ENCODE measurements at regions of chr9 and their contacts with region 1.

Region 1: GRCh38 chr9:20622330-20623020 is at the start of gene MLLT3:
- DNase-seq: peak; percentile 94
- H3K4me3 ChIP-seq: peak within 1 kb of the TSS; percentile 81 to 97 (median 84)
- H3K27ac ChIP-seq: peak within 1 kb of the TSS; percentile 29
- H3K4me1 ChIP-seq: peaks cover 33% of the 10 kb centered on the region
- H3K27me3 ChIP-seq: no peaks in the 10 kb centered on the region
- CTCF ChIP-seq: no peak
- total RNA-seq, gene MLLT3: 8.8 to 11.7 TPM

Region 2: GRCh38 chr9:19925817-19926503 is 696.5 kb before region 1 on chr9:
- CTCF ChIA-PET with region 1: no interaction called
- dilution Hi-C with region 1: no loop called
- in situ Hi-C with region 1: loop called in 1 of 2 experiments (anchors 25 kb)
- intact Hi-C with region 1: loop called (anchors 2 kb)
- DNase-seq: peak; percentile 86
- H3K4me3 ChIP-seq: peak overlapping the region; percentile 21 to 39 (median 36)
- H3K27ac ChIP-seq: no peak overlapping the region
- H3K4me1 ChIP-seq: no peaks in the 10 kb centered on the region
- H3K27me3 ChIP-seq: no peaks in the 10 kb centered on the region
- CTCF ChIP-seq: peak; percentile 96 to 98

Region 3: DNA sequence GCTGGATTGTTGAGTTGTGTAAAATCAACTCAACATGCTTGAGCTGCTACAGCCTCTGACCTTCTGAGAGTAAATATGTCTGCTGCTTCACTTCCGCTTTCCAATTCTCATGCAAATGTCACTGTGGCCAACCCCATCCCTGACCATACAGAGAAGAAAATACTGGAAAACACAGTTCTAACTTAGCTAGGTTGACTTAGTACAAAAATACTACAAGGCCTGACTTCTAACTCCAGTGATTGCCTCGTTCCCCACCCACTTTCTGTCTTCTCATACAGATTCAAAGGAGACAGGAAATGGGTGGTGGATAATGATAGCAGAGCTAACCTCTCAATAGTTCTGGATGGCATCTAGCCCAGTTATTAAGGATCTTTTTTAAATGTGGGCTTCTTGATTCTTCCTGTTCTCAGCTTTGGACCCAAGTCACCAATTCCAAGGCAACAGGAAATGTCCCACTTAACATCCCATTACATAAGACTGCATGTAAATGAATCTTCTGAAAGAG is 607.0 kb before region 1 on chr9:
- CTCF ChIA-PET with region 1: interaction called, 33 read pairs
- dilution Hi-C with region 1: no loop called
- in situ Hi-C with region 1: no loop called
- intact Hi-C with region 1: no loop called
- DNase-seq: no peak
- H3K4me3 ChIP-seq: no peak overlapping the region
- H3K27ac ChIP-seq: no peak overlapping the region
- H3K4me1 ChIP-seq: no peaks in the 10 kb centered on the region
- H3K27me3 ChIP-seq: no peaks in the 10 kb centered on the region
- CTCF ChIP-seq: no peak

Region 4: GRCh38 chr9:20426019-20426418 is 196.5 kb before region 1 on chr9:
- CTCF ChIA-PET with region 1: interaction called, 3 read pairs
- dilution Hi-C with region 1: no loop called
- in situ Hi-C with region 1: no loop called
- intact Hi-C with region 1: loop called (anchors 1 kb)
- DNase-seq: no peak
- H3K4me3 ChIP-seq: no peak overlapping the region
- H3K27ac ChIP-seq: no peak overlapping the region
- H3K4me1 ChIP-seq: no peaks in the 10 kb centered on the region
- H3K27me3 ChIP-seq: no peaks in the 10 kb centered on the region
- CTCF ChIP-seq: no peak

Region 5: DNA sequence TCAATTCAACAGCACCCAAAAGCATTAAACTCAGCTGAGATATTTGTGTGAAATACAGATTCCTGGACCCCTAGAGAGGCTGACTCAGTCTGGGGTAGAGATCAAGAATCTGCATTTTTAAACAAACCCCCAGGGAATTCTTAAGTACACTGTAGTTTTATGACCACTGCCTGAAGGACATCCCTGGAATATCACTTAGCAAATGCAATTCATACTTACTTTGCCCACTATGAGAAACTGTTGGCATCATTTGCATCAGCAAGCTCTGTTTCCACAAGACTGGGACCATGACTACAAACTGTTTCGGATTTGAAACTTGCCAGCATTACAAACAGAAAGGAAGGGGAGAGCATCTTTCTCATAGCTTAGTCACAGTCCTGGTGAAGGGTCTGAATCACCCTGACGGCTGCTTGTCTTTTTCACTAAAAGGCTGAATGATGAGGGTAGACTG is 63.9 kb before region 1 on chr9:
- CTCF ChIA-PET with region 1: interaction called, 4 read pairs
- dilution Hi-C with region 1: no loop called
- in situ Hi-C with region 1: no loop called
- intact Hi-C with region 1: loop called (anchors 1 kb)
- DNase-seq: peak; percentile 94
- H3K4me3 ChIP-seq: no peak overlapping the region
- H3K27ac ChIP-seq: no peak overlapping the region
- H3K4me1 ChIP-seq: peaks cover 10% of the 10 kb centered on the region
- H3K27me3 ChIP-seq: no peaks in the 10 kb centered on the region
- CTCF ChIP-seq: no peak

Region 6: DNA sequence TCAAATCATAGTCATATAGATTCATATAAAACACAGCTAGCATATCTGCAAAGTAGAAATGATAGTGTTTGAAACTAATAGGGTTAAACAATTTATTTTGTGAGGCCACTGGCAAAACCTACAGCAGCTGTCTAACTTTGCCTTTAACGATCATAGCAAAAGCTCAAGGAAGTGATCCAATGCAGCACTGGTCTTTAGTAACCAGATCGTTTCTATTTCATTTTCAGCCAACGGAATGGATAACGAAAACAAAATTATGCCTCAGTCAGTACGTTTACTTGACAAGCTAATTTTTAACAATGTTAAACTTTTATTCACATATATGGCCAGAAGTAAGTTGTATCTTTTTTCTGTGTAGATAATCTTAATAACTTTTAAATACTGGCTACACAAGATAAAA is 17.9 kb before region 1 on chr9:
- CTCF ChIA-PET with region 1: no interaction called
- dilution Hi-C with region 1: no loop called
- in situ Hi-C with region 1: no loop called
- intact Hi-C with region 1: no loop called
- DNase-seq: no peak
- H3K4me3 ChIP-seq: no peak overlapping the region
- H3K27ac ChIP-seq: no peak overlapping the region
- H3K4me1 ChIP-seq: no peaks in the 10 kb centered on the region
- H3K27me3 ChIP-seq: no peaks in the 10 kb centered on the region
- CTCF ChIP-seq: no peak

Region 7: DNA sequence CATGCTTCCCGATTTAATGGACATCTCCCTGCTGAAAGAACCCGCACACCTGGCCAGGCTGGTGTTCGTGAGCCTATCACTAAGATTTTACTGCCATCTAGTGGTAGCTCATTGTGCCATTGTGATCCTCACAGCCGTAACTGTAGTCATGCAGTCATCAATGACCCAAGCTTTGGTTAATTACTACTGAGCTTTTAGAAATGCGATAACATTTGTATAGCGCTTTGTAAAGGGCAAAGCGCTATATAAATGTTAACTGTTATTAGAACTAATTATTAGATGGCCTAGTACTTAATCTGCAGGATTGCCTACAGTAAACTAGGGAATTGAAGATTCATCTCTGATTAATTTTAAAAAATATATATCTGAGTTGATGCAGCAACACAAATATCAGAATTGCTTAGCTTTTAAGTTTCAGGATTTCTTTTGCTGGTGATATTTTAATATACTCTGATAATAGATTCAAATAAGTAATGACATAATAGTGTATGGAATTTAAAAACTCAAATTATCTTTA is 318.8 kb after region 1 on chr9:
- CTCF ChIA-PET with region 1: interaction called, 5 read pairs
- dilution Hi-C with region 1: no loop called
- in situ Hi-C with region 1: loop called in 1 of 2 experiments (anchors 5 kb)
- intact Hi-C with region 1: loop called (anchors 1 kb)
- DNase-seq: peak; percentile 66
- H3K4me3 ChIP-seq: no peak overlapping the region
- H3K27ac ChIP-seq: no peak overlapping the region
- H3K4me1 ChIP-seq: no peaks in the 10 kb centered on the region
- H3K27me3 ChIP-seq: no peaks in the 10 kb centered on the region
- CTCF ChIP-seq: peak; percentile 79 to 81

Region 8: DNA sequence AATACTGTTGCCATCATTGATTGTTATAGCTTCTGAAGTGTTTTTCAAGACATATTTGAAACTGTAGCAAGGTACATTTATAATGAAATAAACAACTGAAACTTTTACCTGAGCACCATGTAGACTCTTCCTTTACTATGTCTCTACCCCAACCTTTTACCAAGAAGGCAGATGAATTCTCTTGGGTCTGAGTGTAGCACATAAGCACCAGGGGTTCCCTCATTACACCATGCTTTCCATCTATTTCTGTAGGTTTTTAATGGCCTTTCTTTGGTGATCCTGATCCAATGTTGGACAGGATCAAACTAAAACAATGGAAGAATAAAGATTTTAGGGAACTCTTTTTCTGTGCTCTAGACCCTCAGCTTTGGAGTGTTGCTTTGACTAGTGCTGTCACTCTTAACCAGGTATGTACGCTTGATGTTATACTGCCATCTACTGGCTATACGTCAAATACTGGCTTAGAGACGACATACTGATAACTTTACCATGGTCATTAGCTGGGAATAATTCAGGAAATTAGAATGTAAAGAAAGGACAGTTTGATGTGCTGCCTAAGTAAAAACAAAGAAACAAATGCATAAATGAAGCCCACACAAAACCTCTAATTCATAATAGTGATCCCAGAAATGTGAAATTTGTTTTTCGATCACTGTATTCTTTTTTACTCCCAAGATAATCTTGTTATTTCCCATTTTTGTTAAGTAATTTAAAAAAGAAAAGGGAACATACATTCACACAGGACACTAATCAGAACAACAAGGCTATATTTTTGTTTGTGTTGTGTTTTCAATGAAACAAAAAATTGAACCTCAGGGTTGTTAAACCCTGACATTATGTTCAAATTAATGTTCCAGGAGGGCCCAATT is 488.5 kb after region 1 on chr9:
- CTCF ChIA-PET with region 1: interaction called, 3 read pairs
- dilution Hi-C with region 1: no loop called
- in situ Hi-C with region 1: loop called (anchors 10 to 25 kb)
- intact Hi-C with region 1: loop called (anchors 1 kb)
- DNase-seq: peak; percentile 52
- H3K4me3 ChIP-seq: no peak overlapping the region
- H3K27ac ChIP-seq: no peak overlapping the region
- H3K4me1 ChIP-seq: no peaks in the 10 kb centered on the region
- H3K27me3 ChIP-seq: no peaks in the 10 kb centered on the region
- CTCF ChIP-seq: peak; percentile 76 to 85

Measured in mammary epithelial cell (primary cell).